Heart right ventricle (tissue), 16 donors: ENCODE measurements at regions of chr9 and their contacts with region 1.

Region 1: DNA sequence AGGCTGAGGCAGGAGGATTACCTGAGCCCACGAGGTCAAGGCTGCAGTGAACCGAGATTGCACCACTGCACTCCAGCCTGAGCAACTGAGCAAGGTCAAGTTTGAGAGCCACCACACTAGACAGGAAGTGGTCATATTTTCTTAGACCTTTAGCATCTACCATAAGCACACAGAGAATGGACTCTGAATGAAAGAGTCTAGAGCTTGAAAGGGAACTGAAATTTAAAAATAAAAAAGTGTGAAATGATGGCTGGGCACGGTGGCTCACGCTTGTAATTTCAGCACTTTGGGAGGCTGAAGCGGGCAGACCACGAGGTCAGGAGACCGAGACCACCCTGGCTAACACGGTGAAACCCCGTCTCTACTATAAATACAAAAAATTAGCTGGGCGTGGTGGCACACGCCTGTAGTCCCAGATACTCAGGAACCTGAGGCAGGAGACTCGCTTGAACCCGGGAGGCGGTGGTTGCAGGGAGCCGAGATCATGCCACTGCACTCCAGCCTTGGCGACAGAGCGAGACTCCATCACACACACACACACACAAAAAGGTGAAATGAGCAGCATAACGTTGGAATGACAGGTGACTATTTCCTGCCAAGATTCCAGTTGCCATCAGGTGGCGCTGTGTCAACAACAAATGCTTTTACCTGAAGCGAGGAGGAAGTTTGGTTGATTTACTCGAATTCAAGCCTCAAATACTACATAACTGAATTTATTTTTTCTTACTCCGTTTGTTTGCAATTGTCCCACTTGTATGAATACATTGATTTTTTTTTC is 21.3 kb upstream of the AK3 start:
- DNase-seq: peak; percentile 51 to 74
- ATAC-seq: peak in 7 of 8 donors; percentile 38 to 75 (median 66)
- H3K4me3 ChIP-seq: peak overlapping the region in 8 of 10 donors; percentile 10 to 41 (median 33)
- H3K27ac ChIP-seq: peak overlapping the region in 7 of 10 donors; percentile 11 to 87 (median 37)
- H3K4me1 ChIP-seq: peaks cover 0 to 47% (median 12%) of the 10 kb centered on the region in 9 donors
- H3K27me3 ChIP-seq: no peaks in the 10 kb centered on the region
- CTCF ChIP-seq: peak; percentile 53 to 90 (median 80)

Region 2: GRCh38 chr9:4792572-4793458 is 30.5 kb after region 1 on chr9 and contains the start of gene RCL1:
- intact Hi-C with region 1: loop called in 3 of 10 experiments (anchors 2 to 5 kb)
- DNase-seq: peak; percentile 93 to 97
- ATAC-seq: peak; percentile 99 to 100 (median 99)
- H3K4me3 ChIP-seq: peak within 1 kb of the TSS; percentile 69 to 97 (median 82)
- H3K27ac ChIP-seq: peak within 1 kb of the TSS; percentile 42 to 87 (median 84)
- H3K4me1 ChIP-seq: peaks cover 0 to 32% (median 20%) of the 10 kb centered on the region in 9 donors
- H3K27me3 ChIP-seq: peaks cover 0 to 2% (median 0%) of the 10 kb centered on the region in 7 donors
- CTCF ChIP-seq: no peak
- total RNA-seq, gene RCL1: 4.8 to 9.9 (median 6.8) TPM

Region 3: GRCh38 chr9:4923580-4924544 is 161.6 kb after region 1 on chr9:
- intact Hi-C with region 1: loop called in 4 of 10 experiments (anchors 5 to 10 kb)
- DNase-seq: no peak
- ATAC-seq: peak in 4 of 8 donors; percentile 41 to 67 (median 56)
- H3K4me3 ChIP-seq: no peak overlapping the region
- H3K27ac ChIP-seq: peak overlapping the region in 4 of 10 donors; percentile 2 to 56 (median 42)
- H3K4me1 ChIP-seq: peaks cover 0 to 17% (median 7%) of the 10 kb centered on the region in 9 donors
- H3K27me3 ChIP-seq: no peaks in the 10 kb centered on the region
- CTCF ChIP-seq: peak in 7 of 9 donors; percentile 20 to 44 (median 39)

Region 4: GRCh38 chr9:5425006-5425628 is 662.8 kb after region 1 on chr9:
- intact Hi-C with region 1: loop called in 6 of 10 experiments (anchors 10 kb)
- DNase-seq: no peak
- ATAC-seq: no peak
- H3K4me3 ChIP-seq: no peak overlapping the region
- H3K27ac ChIP-seq: no peak overlapping the region
- H3K4me1 ChIP-seq: no peaks in the 10 kb centered on the region
- H3K27me3 ChIP-seq: no peaks in the 10 kb centered on the region
- CTCF ChIP-seq: peak in 7 of 9 donors; percentile 30 to 57 (median 46)

Region 5: DNA sequence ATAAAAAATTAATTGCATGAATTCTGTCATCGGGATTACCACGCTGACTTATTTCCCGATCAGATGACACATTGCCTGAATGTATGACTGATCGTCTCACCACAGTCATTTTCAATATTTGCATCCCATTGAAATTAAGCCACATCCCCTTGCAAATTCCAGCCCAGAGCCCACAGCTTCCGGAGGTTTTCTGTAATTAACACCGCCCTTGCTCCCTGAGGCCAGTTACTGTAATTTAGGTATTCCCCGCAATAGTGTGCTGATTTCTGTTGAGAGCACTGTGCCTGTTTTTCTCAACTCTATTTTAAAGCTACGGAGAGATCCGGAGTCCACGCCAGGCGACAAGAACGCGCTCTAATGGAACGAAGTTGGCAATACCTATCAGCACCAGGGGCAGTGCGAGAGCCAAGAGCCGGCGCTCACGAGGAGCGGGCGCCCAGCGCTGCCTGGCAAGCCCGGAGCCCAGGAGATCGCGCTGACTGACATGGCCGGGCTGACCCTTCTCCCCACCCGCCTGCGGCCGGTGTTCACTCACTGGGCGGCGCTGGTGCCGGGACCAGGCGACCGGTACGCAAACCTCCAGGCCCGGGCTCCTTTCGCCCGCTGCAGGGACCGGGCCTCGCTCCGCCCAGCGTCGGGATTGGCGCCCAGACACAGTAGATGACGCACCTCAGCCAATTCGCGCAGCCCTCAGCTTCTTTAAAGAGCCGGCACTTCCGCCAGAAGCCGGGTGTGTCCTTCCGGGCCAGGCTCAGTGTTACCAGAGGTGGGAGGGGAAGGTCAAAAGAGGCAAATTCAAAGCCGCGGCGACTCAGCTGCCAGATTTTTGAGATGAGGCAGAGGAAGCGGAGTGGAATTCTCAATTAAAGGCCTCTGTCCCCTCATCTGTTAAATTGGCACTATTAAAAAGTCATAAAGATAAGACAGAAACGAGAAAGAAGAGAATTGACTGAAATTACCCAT is 675.2 kb after region 1 on chr9 and contains the start of gene PLGRKT:
- intact Hi-C with region 1: loop called in 2 of 10 experiments (anchors 10 kb)
- DNase-seq: peak; percentile 95
- ATAC-seq: peak; percentile 99
- H3K4me3 ChIP-seq: peak within 1 kb of the TSS; percentile 39 to 87 (median 67)
- H3K27ac ChIP-seq: peak within 1 kb of the TSS; percentile 41 to 97 (median 92)
- H3K4me1 ChIP-seq: peaks cover 0 to 26% (median 22%) of the 10 kb centered on the region in 9 donors
- H3K27me3 ChIP-seq: no peaks in the 10 kb centered on the region
- CTCF ChIP-seq: peak in 6 of 9 donors; percentile 10 to 53 (median 33)
- total RNA-seq, gene PLGRKT: 30.1 to 53.0 (median 36.3) TPM

Region 6: DNA sequence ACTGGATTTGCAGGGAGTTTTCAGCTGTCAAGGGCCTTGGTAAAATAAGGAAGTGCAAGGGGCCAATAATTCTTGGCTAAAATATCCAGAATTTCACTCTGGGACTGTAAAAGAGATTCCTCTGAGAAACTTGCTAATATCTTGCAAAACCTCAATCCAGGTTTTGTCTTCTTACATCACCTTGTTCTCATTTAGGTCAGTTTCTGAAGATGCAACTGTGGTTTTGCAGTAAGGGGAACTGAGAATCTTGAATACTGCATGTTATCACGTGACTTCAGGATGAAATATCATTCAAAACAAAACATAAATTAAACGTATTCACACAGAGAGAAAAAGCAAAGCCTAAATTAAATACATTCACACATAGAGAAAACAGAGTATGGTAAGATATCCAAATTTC is 831.6 kb after region 1 on chr9:
- intact Hi-C with region 1: loop called in 6 of 10 experiments (anchors 5 to 10 kb)
- DNase-seq: no peak
- ATAC-seq: no peak
- H3K4me3 ChIP-seq: no peak overlapping the region
- H3K27ac ChIP-seq: no peak overlapping the region
- H3K4me1 ChIP-seq: peaks cover 0 to 20% (median 4%) of the 10 kb centered on the region in 9 donors
- H3K27me3 ChIP-seq: no peaks in the 10 kb centered on the region
- CTCF ChIP-seq: no peak

Region 7: GRCh38 chr9:5608298-5609225 is 846.3 kb after region 1 on chr9:
- intact Hi-C with region 1: loop called in 2 of 10 experiments (anchors 5 to 10 kb)
- DNase-seq: no peak
- ATAC-seq: peak in 7 of 8 donors; percentile 79 to 96 (median 85)
- H3K4me3 ChIP-seq: peak overlapping the region; percentile 18 to 53 (median 49)
- H3K27ac ChIP-seq: peak overlapping the region; percentile 51 to 78 (median 73)
- H3K4me1 ChIP-seq: peaks cover 0 to 26% (median 11%) of the 10 kb centered on the region in 9 donors
- H3K27me3 ChIP-seq: no peaks in the 10 kb centered on the region
- CTCF ChIP-seq: peak in 4 of 9 donors; percentile 3 to 30 (median 27)